Caco-2 (cell line): ENCODE measurements at regions of chr12 and their contacts with region 1.

Region 1: GRCh38 chr12:123421314-123421713 is 15.2 kb downstream of the RILPL2 start:
- DNase-seq: no peak
- H3K4me3 ChIP-seq: no peak overlapping the region
- H3K4me3 Mint-ChIP-seq: no peak overlapping the region
- H3K27ac Mint-ChIP-seq: no peak overlapping the region
- H3K4me1 ChIP-seq: no peaks in the 10 kb centered on the region
- H3K4me1 Mint-ChIP-seq: no peaks in the 10 kb centered on the region
- H3K27me3 ChIP-seq: no peaks in the 10 kb centered on the region
- H3K27me3 Mint-ChIP-seq: no peaks in the 10 kb centered on the region
- CTCF ChIP-seq: no peak

Region 2: DNA sequence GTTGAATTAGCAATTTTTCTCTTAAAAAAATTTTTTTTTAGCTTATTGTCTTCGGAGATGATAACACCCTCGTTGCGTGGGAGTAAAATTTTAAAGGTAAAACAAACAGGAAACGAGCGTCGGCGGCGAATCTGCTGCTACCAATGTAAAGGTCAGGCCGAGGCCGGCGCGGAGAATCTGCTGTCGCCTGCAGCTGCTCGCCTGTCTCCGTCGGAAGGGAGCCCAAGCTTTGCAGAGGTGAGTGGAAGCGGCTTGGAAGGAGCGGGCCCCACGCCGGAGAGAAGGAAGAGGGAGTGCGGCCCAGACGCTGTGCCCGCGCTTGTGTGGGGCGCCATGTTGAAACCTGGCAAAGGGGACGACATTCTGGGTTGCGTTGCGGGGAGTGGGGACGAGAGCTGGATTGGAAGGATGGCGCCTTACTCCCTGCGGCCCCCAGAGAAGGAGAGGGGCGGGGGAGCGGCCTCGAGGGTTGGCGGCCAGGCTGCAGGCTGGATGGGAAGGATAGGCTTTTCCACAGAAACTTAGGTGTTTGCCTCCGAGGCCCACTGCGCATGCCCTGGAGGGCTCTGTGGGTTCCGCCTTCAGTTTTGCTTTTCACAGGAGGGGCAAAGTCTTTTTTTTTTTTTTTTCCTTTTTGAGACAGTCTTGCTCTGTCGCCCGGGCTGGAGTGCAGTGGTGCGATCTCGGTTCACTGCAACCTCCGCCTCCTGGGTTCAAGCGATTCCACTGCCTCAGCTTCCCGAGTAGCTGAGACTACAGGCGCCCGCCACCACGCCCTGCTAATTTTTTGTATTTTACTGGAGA is 36.9 kb after region 1 on chr12 and contains the start of gene SNRNP35:
- CTCF ChIA-PET with region 1: no interaction called
- POLR2A ChIA-PET with region 1: interaction called, 10 read pairs
- intact Hi-C with region 1: no loop called
- DNase-seq: peak; percentile 89 to 92
- H3K4me3 ChIP-seq: peak within 1 kb of the TSS; percentile 85
- H3K4me3 Mint-ChIP-seq: peak within 1 kb of the TSS; percentile 98
- H3K27ac Mint-ChIP-seq: peak within 1 kb of the TSS; percentile 100
- H3K4me1 ChIP-seq: no peaks in the 10 kb centered on the region
- H3K4me1 Mint-ChIP-seq: peaks cover 6% of the 10 kb centered on the region
- H3K27me3 ChIP-seq: no peaks in the 10 kb centered on the region
- H3K27me3 Mint-ChIP-seq: no peaks in the 10 kb centered on the region
- CTCF ChIP-seq: no peak
- total RNA-seq, gene SNRNP35: 22.0 and 22.7 TPM in 2 replicates

Region 3: GRCh38 chr12:123767613-123768012 is 346.3 kb after region 1 on chr12:
- CTCF ChIA-PET with region 1: no interaction called
- POLR2A ChIA-PET with region 1: no interaction called
- intact Hi-C with region 1: no loop called
- DNase-seq: no peak
- H3K4me3 ChIP-seq: no peak overlapping the region
- H3K4me3 Mint-ChIP-seq: no peak overlapping the region
- H3K27ac Mint-ChIP-seq: no peak overlapping the region
- H3K4me1 ChIP-seq: no peaks in the 10 kb centered on the region; the same call in 1 of the 2 replicates
- H3K4me1 Mint-ChIP-seq: no peaks in the 10 kb centered on the region
- H3K27me3 ChIP-seq: no peaks in the 10 kb centered on the region
- H3K27me3 Mint-ChIP-seq: no peaks in the 10 kb centered on the region
- CTCF ChIP-seq: no peak